ENCODE measurements at regions of chr3 and their contacts with region 1.

Region 1: GRCh38 chr3:45665101-45665572 is 24.1 kb upstream of the SACM1L start:
- DNase-seq: no peak
- H3K4me3 ChIP-seq: no peak overlapping the region
- CTCF ChIP-seq: peak; percentile 35

Region 2: DNA sequence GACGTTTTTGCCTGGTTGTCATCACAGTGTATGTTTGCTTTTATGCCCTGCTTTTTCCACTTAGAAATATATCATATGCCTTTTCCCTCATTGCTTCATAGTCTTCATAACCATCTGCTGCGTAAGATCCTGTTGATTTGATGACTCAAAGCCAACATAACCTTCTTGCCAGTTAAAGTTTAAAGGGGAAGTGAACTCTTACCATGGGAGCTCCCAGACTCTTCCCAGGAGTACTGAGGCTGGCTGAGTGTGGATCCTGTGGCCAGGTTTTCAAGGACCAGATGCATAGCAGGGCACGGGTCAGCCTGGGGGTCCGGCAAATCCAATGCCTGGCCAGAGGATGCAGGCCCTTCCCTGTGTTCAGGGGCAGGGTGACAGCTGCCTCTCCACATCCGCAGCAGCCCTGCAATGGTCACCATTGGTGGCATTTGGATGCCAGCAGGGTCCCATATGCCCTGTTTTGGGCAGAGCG is 18.0 kb before region 1 on chr3:
- CTCF ChIA-PET with region 1: interaction called, 34 read pairs
- POLR2A ChIA-PET with region 1: interaction called, 13 read pairs
- DNase-seq: peak; percentile 79
- H3K4me3 ChIP-seq: no peak overlapping the region
- CTCF ChIP-seq: no peak

Region 3: DNA sequence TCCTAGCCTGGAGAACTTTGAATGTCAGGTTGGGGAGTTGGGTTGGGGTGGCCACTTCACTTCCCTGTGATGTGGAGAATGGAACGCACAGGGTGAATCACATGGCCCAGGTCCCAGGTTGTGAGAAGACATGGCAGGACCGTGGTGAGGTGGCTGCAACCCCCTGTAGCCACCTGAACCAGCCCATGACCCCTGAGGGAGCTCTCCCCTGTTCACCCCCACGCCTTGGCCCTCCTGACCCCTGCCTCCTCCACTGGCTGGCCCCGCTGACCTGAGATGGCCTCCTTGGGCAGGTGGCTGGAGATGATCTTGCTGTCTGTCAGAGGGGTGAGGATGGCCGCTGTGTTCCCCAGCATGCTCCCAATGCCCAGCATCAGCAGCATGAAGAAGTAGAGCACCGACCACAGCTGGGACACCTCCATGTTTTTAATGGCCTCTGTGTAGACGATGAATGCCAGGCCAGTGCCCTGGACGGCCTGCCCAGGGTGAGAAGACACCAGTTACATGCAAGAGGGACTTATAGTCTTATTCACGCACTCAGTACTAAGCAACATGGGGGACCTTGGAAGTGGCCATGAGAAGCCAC is 100.2 kb after region 1 on chr3:
- CTCF ChIA-PET with region 1: no interaction called
- POLR2A ChIA-PET with region 1: no interaction called
- DNase-seq: no peak
- H3K4me3 ChIP-seq: no peak overlapping the region
- CTCF ChIP-seq: no peak

Region 4: DNA sequence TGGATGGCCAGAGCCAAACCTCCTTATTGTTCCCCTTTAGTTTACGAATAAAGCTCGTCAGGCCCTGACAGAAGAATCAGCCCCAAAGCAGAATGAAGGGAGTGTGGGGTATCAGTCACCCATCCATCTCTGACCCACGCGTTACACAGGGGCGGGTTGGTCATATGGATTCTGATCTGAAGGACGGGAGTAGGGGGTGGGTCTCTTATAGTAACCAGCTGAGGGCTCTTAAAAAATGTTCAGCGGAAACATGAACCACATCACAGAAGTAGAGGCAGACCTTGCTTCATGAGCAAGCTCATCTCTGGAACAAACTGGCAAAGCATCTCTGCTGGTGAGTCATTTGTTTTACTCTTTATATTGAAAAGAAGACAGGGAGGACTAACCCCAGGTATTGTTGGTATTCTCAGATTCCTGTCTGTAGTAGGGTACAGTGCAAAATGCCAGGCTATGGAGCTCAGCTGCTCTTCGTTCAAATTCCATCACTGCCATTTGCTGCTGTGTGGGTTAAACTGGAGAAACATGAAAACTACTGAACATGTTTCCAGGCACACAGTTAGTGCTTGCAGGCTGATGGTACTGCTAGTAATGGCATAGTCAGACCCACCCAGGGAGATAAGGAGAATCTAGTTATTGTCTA is 278.2 kb after region 1 on chr3 and contains the start of gene CXCR6:
- CTCF ChIA-PET with region 1: no interaction called
- POLR2A ChIA-PET with region 1: no interaction called
- DNase-seq: no peak
- H3K4me3 ChIP-seq: no peak within 1 kb of the TSS
- CTCF ChIP-seq: no peak